A549 (cell line): ENCODE measurements at regions of chr20 and their contacts with region 1.

Region 1: GRCh38 chr20:10090588-10091166 is 55.9 kb downstream of the ANKEF1 start:
- DNase-seq: peak; percentile 57 to 76
- ATAC-seq: peak; percentile 84 to 91
- H3K4me3 ChIP-seq: no peak overlapping the region
- H3K27ac ChIP-seq: peak overlapping the region; percentile 70 to 85
- H3K4me1 ChIP-seq: peaks cover 43% of the 10 kb centered on the region
- CTCF ChIP-seq: peak; percentile 96
- EP300 ChIP-seq: no peak
- POLR2A ChIP-seq: no peak
- RAD21 ChIP-seq: peak; percentile 95 to 96

Region 2: DNA sequence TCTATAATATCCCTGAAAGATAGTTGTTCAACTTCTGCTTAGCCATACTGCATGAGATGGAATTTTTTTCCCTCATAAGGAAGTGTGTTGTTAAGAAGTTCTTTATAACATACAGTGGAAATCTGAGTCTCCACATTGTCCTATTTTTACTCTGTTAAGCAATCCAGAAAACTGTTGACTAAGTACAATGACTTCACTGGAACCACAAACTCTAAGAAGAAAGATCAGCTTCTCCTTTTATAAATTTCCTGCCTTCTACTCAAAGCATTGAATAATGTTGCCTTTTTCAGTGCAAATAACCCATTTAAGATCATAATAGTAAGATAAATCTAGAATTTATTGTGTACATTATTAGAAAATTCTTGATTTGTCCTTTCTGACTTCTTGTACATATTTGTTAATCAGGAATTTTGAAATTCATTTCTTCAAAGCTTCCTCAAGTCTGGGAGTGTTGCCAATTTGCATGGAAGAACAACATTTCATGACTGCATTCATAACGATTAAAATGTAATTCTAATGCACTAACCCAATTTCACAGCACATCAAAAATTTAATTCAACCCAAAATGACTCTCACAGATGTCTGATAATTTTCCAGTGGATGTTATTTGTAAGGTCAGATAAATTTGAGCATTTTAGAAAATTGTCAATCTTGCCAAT is 101.5 kb before region 1 on chr20:
- CTCF ChIA-PET with region 1: interaction called, 45 read pairs
- POLR2A ChIA-PET with region 1: no interaction called
- DNase-seq: no peak
- ATAC-seq: no peak
- H3K4me3 ChIP-seq: no peak overlapping the region
- H3K27ac ChIP-seq: peak overlapping the region; percentile 21 to 55; a peak in 5 of 6 replicates
- H3K4me1 ChIP-seq: peaks cover 6% of the 10 kb centered on the region; the same call in 1 of the 3 replicates
- CTCF ChIP-seq: no peak
- EP300 ChIP-seq: no peak
- POLR2A ChIP-seq: no peak
- RAD21 ChIP-seq: no peak

Region 3: DNA sequence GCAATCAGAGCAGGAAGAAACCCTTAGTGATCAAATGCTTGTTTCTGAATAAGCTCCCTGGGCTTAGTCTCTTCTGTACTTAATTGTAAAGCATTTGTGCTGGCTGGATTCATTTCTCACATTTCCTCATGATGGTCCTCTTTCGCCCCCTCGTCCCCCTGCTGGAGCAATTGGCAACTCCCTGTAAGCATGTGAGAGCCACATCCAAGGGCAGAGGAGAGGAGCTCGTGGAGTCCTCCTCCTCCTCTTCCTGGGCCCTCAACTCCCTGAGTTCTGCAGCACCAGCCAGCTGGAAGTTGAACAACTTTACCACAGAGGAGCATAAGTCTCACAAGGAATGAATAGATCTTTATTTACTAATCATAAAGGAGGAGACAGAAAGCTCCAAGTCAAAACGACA is 43.2 kb before region 1 on chr20:
- CTCF ChIA-PET with region 1: interaction called, 13 read pairs
- POLR2A ChIA-PET with region 1: no interaction called
- DNase-seq: peak; percentile 42 to 53
- ATAC-seq: peak; percentile 94 to 97
- H3K4me3 ChIP-seq: no peak overlapping the region
- H3K27ac ChIP-seq: peak overlapping the region in 1 of 2 experiments; percentile 9; a peak in 1 of 6 replicates
- H3K4me1 ChIP-seq: no peaks in the 10 kb centered on the region
- CTCF ChIP-seq: peak; percentile 32; the same call in 2 of the 3 replicates
- EP300 ChIP-seq: no peak
- POLR2A ChIP-seq: no peak
- RAD21 ChIP-seq: peak; percentile 25 to 28; a peak in 1 of 5 replicates

Region 4: DNA sequence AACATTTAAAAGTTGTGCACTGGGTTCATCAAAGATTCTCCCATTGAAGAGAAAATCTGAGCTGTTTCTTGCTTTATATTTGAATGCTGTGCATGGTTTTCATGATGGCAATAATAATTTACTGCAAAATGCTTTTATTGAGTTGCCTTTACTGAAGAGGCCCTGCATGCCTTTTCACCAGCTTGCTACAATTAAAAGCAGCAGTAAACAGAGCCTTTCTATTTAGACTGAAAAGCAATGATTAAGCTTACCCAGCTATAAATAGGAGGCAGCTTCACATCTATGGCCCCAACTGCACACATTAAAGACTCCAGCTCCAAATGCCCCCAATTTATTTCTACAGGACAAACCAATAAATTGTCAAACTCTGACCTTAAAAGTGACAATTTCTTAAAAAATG is 14.4 kb after region 1 on chr20:
- CTCF ChIA-PET with region 1: interaction called, 43 read pairs
- POLR2A ChIA-PET with region 1: no interaction called
- DNase-seq: no peak
- ATAC-seq: no peak
- H3K4me3 ChIP-seq: no peak overlapping the region
- H3K27ac ChIP-seq: no peak overlapping the region
- H3K4me1 ChIP-seq: no peaks in the 10 kb centered on the region
- CTCF ChIP-seq: no peak
- EP300 ChIP-seq: no peak
- POLR2A ChIP-seq: no peak
- RAD21 ChIP-seq: no peak

Region 5: GRCh38 chr20:10249048-10249770 is 158.5 kb after region 1 on chr20:
- CTCF ChIA-PET with region 1: interaction called, 15 read pairs
- POLR2A ChIA-PET with region 1: interaction called, 3 read pairs
- DNase-seq: peak; percentile 51 to 94
- ATAC-seq: peak; percentile 35 to 58; a peak in 4 of 6 replicates
- H3K4me3 ChIP-seq: no peak overlapping the region
- H3K27ac ChIP-seq: peak overlapping the region; percentile 89 to 91
- H3K4me1 ChIP-seq: peaks cover 78% of the 10 kb centered on the region
- CTCF ChIP-seq: no peak
- EP300 ChIP-seq: peak; percentile 85 to 92; a peak in 3 of 5 replicates
- POLR2A ChIP-seq: no peak
- RAD21 ChIP-seq: peak; percentile 37 to 59

Region 6: DNA sequence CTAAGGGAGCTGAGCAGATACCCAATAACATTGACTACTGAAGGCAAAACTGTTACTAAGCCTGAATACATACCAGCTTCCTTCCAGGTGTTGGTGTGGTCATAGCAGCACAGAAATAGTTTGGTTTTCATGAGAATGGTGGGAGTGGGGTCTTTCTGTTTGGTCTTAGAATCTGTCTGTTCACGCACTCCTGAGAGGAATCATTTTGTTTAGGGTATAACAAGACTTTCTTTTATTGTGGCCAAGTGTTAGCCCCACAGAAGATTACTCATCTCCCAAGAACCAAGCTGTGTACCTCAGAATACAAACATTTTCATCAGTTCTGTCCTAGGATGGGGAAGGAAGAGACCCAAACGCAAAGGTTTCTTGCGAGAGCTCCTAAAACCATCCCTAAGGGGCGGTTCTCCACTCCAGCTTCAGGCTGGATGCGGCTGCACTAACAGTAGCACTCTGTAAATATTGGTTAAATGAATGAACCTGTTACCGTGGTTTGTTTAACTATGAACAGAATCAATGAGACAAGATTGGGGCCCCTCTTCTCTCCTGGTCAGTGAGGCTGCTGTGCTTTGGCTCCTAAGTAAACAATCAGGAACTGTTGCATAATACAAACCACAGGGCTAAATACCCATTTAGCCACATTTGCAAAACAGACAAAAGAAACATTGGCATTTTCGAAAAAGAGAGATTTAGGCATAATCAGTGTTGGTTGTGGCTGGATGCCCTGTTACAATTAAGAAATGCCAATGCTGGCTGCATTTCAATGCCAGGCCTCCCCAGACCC is 172.9 kb after region 1 on chr20:
- CTCF ChIA-PET with region 1: no interaction called
- POLR2A ChIA-PET with region 1: no interaction called
- DNase-seq: peak in 1 of 2 experiments; percentile 35
- ATAC-seq: peak; percentile 25 to 51; a peak in 3 of 6 replicates
- H3K4me3 ChIP-seq: no peak overlapping the region
- H3K27ac ChIP-seq: peak overlapping the region; percentile 46 to 73; a peak in 5 of 6 replicates
- H3K4me1 ChIP-seq: peaks cover 52% of the 10 kb centered on the region
- CTCF ChIP-seq: no peak
- EP300 ChIP-seq: 0 out of 5 replicates have a peak, but pooled peaks of 1 of the 2 experiments have one; percentile 10
- POLR2A ChIP-seq: no peak
- RAD21 ChIP-seq: no peak

Region 7: DNA sequence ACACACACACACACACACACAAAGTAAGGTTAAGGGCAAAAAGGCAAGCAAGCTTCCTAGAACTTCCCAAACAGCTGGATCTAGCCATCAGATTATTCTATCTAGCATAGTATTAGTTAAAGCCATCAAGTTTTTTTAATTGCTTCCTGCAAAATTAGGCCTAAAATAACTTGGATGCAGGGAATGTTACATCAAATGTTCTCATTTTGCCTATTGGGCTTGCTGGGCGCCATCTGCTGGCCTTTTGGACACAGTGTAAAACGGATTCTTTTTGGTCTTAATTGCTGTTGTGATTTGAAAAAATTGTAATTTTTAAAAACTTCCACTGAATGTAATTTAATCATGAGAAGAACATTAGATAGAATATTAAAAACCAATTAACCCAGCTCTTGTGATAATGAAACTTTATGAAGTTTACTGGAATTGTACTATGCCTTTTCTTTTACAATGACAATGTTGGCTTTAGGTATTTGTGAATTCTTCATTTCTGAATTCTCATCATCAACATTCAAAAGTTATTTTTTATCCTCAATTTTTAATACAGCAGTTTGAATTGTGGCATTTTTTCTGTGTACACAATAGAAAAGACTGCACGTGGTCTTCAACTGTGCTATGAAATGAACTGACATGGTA is 336.5 kb after region 1 on chr20:
- CTCF ChIA-PET with region 1: interaction called, 44 read pairs
- POLR2A ChIA-PET with region 1: no interaction called
- DNase-seq: peak; percentile 55 to 84
- ATAC-seq: peak in 1 of 2 experiments; percentile 64; a peak in 3 of 6 replicates
- H3K4me3 ChIP-seq: no peak overlapping the region
- H3K27ac ChIP-seq: peak overlapping the region; percentile 90 to 96
- H3K4me1 ChIP-seq: peaks cover 80% of the 10 kb centered on the region
- CTCF ChIP-seq: peak; percentile 98
- EP300 ChIP-seq: no peak
- POLR2A ChIP-seq: no peak
- RAD21 ChIP-seq: peak; percentile 87 to 90